ENCODE measurements at regions of chr11 and their contacts with region 1.

Region 1: DNA sequence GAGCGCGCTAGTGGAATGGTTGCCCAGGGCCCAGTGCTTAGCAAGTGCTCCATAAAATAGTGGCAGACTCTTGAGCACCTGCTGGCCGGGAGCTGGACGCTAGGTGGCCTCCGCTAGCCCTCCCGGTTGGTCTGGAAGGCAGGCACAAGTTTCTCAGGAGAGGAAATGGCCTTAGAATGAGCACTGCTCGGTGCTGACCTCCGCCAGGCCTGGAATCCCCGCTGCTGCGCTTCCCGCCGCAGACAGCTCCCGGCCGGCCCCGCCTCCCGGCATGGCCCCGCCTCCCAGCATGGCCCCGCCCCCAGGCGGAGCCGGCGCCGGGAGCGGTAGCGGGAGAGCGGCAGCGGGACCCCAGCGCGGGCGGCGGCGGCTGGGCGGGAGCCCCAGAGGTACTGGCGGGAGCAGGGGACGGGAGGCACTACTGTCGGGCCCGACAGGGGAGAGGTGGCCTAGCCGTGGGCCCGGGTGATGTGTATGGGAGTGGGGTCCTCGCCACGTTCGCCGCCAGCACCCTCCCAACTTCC is at the start of gene SIPA1:
- DNase-seq: peak in 41 of 42 donors; percentile 31 to 86 (median 71)

Region 2: GRCh38 chr11:65471410-65471762 is 166.5 kb before region 1 on chr11:
- intact Hi-C with region 1: no loop called
- DNase-seq: peak in 40 of 42 donors; percentile 46 to 88 (median 74)

Region 3: DNA sequence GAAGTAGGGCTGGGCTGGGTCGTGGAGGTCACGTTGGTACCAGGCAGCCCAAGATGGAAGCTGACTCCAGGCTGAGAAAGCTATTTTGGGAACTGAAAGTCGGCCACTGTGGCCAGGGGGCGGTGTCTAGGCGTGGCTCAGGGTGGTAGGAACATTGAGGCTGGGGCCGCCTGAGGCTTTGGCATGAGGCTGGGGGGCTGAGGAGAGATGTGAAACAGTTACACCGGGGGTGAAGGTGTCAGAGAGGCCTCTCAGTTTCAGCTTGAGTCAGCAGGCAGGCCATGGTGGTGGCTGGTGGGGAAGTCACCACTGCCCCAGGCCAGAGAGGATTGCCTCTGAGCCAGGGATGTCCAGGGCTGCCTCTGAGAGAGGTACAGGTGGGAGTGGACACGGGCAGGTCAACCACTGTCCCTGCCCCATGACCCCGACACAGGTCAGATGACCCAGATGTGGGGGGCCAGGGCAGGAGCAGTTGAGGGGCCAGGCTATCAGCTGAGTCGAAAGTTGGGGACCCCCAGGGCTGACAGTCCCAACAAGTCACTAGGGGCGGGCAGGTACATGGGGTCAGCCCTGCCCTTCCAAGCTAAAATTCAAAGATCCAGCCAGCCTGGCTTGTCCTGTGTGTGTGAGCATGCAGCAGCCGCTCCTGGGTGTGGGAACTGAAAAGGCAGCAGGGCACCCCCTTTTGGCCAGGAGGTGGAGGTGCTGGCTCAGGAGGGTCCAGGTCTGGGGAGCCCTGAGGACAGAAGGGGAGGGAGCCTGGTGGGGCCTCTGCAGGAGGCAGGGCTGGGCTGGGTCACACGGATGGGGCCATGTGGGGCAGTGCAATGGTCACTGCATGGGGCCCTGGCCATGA is 49.4 kb before region 1 on chr11:
- intact Hi-C with region 1: no loop called
- DNase-seq: peak in 26 of 42 donors; percentile 45 to 80 (median 62)

Region 4: DNA sequence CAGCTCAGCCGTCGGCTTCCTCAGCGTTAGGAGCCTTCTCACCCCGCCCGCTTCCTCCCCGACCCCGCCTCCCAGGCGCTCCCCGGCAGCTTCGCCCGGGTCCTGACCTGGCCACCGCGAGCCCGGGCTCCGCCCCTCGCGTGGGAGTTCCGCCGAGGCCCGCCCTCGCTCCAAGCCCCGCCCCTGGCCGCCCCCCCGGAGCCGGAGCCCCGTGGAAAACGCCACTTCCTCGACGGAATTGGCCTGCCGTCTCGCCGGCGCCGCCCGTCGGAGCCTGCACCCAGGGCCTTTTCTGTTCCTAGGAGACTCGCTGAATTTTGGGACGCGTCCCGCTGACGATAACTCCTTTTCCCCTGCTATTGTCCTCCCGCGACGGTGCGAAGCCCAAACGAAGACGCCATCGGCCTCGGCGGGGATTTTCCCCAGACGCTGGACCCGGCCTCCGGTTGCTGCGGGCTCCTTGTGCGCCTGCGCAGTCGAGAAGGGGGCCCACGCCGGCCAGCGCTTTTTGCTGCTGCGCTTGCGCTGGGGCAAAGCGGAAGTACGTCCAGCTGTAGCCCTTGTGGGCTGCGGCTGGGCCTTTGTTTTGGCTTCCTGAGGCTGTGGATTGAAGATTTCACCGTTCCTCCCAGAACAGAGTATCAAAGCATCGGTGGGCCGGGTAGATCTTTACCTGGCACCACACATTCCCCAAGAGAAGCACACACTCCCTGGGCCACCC is 14.8 kb after region 1 on chr11:
- intact Hi-C with region 1: loop called (anchors 2 kb)
- DNase-seq: peak; percentile 68 to 95 (median 88)